ENCODE measurements at regions of chr17 and their contacts with region 1.

Region 1: GRCh38 chr17:76296186-76296585 is 11.9 kb downstream of the QRICH2 start:
- H3K4me3 ChIP-seq: no peak overlapping the region
- H3K27ac ChIP-seq: no peak overlapping the region
- H3K4me1 ChIP-seq: no peaks in the 10 kb centered on the region
- CTCF ChIP-seq: no peak

Region 2: GRCh38 chr17:76240461-76241203 is 55.6 kb before region 1 on chr17 and contains the start of gene RNF157:
- CTCF ChIA-PET with region 1: no interaction called
- POLR2A ChIA-PET with region 1: no interaction called
- H3K4me3 ChIP-seq: peak within 1 kb of the TSS; percentile 33
- H3K27ac ChIP-seq: peak within 1 kb of the TSS; percentile 21; the same call in 1 of the 2 replicates
- H3K4me1 ChIP-seq: peaks cover 7% of the 10 kb centered on the region
- CTCF ChIP-seq: no peak

Region 3: GRCh38 chr17:76312735-76313134 is 16.5 kb after region 1 on chr17:
- CTCF ChIA-PET with region 1: interaction called, 18 read pairs
- POLR2A ChIA-PET with region 1: no interaction called
- H3K4me3 ChIP-seq: no peak overlapping the region
- H3K27ac ChIP-seq: no peak overlapping the region
- H3K4me1 ChIP-seq: no peaks in the 10 kb centered on the region
- CTCF ChIP-seq: no peak

Region 4: DNA sequence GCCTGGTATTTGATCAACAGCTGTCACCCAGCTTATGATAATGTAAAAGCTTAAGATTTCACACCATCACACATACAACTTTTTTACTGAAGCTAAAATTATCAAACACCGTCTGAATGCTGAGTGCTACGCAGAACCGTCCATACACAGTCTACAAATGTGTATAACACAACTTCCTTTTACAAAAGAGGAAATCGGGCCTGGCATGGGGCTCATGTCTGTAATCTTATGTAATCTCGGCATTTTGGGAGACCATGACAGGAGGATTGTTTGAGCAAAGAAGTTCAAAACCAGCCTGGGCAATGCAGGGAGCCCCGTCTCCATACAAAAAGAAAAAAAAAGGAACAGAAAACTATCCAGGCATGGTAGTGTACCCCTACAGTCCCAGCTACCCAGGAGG is 31.5 kb after region 1 on chr17:
- CTCF ChIA-PET with region 1: interaction called, 24 read pairs
- POLR2A ChIA-PET with region 1: no interaction called
- H3K4me3 ChIP-seq: no peak overlapping the region
- H3K27ac ChIP-seq: no peak overlapping the region
- H3K4me1 ChIP-seq: peaks cover 3% of the 10 kb centered on the region; the same call in 1 of the 2 replicates
- CTCF ChIP-seq: no peak